ENCODE measurements at regions of chr17 and their contacts with region 1.

Region 1: GRCh38 chr17:80959330-80960036 is 32.2 kb upstream of the CHMP6 start:
- DNase-seq: peak; percentile 98
- H3K4me3 ChIP-seq: peak overlapping the region in 1 of 4 donors; percentile 6
- H3K27ac ChIP-seq: peak overlapping the region; percentile 91 to 93 (median 91)
- H3K4me1 ChIP-seq: peaks cover 0 to 46% (median 44%) of the 10 kb centered on the region in 4 donors
- H3K27me3 ChIP-seq: no peaks in the 10 kb centered on the region
- CTCF ChIP-seq: no peak
- EP300 ChIP-seq: peak in 3 of 4 donors; percentile 53 to 85 (median 77)
- POLR2A ChIP-seq: no peak

Region 2: DNA sequence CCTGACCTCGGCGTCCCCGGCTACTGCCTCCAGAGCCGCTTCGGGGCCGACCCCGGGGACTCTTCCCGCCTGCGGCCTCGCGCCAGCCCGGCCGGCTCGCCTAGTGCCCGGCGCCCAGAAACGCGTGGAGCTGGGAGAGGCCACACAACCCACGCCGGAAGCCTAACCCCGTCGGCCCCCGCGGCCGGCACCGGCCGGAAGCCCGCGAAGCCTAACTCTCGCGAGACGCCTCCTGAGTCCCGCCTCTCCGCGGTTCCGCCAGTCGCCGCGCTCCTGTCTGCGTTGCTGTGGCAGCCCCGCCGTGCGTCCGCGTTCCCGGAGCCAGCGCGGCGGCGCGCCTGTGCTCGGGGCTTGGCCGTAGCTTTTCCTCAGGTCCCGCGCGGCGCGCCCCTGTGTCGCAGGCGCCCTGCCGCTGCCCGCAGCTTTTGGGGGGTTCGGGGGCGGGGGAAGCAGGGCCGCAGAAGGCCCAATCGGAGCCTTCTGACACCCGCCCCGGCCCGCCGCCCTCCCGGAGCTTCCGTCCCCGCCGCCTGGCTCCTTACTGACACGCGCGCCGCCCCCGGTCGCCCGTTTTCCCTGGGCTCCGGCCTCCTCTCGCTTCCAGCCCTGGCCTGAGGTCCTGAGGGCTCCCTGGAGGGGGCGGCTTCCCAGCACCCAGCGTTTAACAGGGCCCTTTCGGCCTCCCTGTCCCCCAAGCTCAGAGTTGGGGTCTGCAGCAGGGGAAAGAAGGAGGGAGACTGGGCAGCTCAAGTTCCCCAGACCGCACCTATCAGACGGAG is 504.7 kb before region 1 on chr17:
- intact Hi-C with region 1: loop called (anchors 10 kb)
- DNase-seq: peak; percentile 98
- H3K4me3 ChIP-seq: peak overlapping the region; percentile 67 to 84 (median 80)
- H3K27ac ChIP-seq: peak overlapping the region; percentile 99
- H3K4me1 ChIP-seq: peaks cover 0 to 74% (median 54%) of the 10 kb centered on the region in 4 donors
- H3K27me3 ChIP-seq: no peaks in the 10 kb centered on the region
- CTCF ChIP-seq: no peak
- EP300 ChIP-seq: no peak
- POLR2A ChIP-seq: peak; percentile 59 to 73

Region 3: DNA sequence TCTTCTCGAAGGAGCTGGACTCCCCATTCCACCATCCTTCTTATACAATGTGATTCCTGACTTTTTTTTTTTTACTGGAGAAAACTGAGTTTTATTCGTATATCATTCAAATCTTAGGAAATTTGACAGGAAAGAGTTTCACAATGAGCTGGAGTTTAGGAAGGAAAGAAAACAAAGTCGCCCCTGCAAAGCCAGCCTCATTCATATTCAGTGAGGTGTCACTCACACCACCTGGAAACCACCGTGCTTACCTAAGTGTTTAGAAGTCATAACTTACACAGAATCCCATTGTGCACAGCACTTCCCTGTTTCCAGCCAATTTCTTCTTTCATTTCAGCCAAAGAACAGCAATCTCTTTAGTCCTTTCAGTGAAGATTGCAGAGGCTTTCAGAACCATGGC is 58.2 kb before region 1 on chr17:
- intact Hi-C with region 1: no loop called
- DNase-seq: no peak
- H3K4me3 ChIP-seq: no peak overlapping the region
- H3K27ac ChIP-seq: no peak overlapping the region
- H3K4me1 ChIP-seq: no peaks in the 10 kb centered on the region
- H3K27me3 ChIP-seq: no peaks in the 10 kb centered on the region
- CTCF ChIP-seq: no peak
- EP300 ChIP-seq: no peak
- POLR2A ChIP-seq: no peak

Region 4: DNA sequence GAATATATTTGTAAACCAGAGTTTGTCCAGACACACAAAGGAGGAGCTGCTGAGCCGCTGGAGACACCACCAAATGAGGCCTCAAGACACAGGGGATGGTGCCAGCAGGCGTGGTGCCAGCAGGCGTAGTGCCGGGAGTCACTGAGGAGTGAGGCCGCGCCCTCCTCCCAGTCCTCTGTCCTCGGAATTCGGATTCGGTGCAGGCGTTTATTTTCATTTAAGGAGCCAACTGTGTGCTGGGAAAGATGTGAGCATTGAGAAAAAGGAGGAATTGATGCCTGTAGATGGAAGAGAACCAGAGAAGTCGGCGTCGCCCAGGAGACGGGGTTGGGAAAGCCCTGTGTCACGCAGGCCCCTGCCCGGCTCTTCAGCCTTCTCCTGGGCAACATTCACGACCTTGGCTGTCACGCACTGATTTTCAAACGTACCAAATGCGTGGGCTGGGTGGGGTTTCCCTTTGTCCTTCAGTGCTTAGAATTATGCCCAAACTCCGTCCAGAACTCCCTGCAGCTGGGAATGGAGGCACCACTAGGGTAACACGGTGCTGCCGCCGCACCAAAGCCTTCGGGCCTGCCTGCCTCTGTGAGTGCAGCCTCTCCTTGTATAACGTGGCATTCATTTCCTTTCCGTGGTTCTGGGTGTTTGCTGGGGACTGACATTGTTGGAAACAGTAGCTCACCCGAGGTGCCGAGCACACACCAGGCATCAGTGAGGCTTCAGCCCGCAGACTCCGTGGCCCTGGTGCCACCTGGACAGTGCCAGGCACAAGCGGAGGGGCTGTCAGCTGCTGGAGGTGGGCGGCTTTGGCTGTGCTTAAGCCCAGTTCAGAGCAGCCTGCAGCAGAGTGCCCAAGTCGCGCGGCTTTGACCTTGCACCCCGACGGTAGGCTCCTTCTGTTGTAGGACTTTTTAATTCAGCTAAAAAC is 16.8 kb before region 1 on chr17:
- intact Hi-C with region 1: loop called (anchors 2 kb)
- DNase-seq: peak; percentile 99
- H3K4me3 ChIP-seq: peak overlapping the region in 1 of 4 donors; percentile 3
- H3K27ac ChIP-seq: peak overlapping the region; percentile 88 to 94 (median 90)
- H3K4me1 ChIP-seq: peaks cover 0 to 47% (median 39%) of the 10 kb centered on the region in 4 donors
- H3K27me3 ChIP-seq: no peaks in the 10 kb centered on the region
- CTCF ChIP-seq: no peak
- EP300 ChIP-seq: no peak
- POLR2A ChIP-seq: no peak

Region 5: GRCh38 chr17:81238817-81239600 is 279.5 kb after region 1 on chr17 and contains the starts of genes NDUFAF8 and TEPSIN:
- intact Hi-C with region 1: no loop called
- DNase-seq: peak; percentile 99
- H3K4me3 ChIP-seq: peak within 1 kb of the TSS; percentile 76 to 93 (median 90)
- H3K27ac ChIP-seq: peak within 1 kb of the TSS; percentile 87 to 92 (median 88)
- H3K4me1 ChIP-seq: peaks cover 0 to 45% (median 36%) of the 10 kb centered on the region in 4 donors
- H3K27me3 ChIP-seq: no peaks in the 10 kb centered on the region
- CTCF ChIP-seq: peak in 1 of 4 experiments; percentile 8
- EP300 ChIP-seq: no peak
- POLR2A ChIP-seq: peak; percentile 6 to 19
- total RNA-seq, gene NDUFAF8: 8.6 to 52.4 (median 35.0) TPM
- total RNA-seq, gene TEPSIN: 15.7 to 42.8 (median 24.4) TPM

Measured in sigmoid colon (tissue), 7 donors.